ENCODE measurements at regions of chr1 and their contacts with region 1.

Region 1: DNA sequence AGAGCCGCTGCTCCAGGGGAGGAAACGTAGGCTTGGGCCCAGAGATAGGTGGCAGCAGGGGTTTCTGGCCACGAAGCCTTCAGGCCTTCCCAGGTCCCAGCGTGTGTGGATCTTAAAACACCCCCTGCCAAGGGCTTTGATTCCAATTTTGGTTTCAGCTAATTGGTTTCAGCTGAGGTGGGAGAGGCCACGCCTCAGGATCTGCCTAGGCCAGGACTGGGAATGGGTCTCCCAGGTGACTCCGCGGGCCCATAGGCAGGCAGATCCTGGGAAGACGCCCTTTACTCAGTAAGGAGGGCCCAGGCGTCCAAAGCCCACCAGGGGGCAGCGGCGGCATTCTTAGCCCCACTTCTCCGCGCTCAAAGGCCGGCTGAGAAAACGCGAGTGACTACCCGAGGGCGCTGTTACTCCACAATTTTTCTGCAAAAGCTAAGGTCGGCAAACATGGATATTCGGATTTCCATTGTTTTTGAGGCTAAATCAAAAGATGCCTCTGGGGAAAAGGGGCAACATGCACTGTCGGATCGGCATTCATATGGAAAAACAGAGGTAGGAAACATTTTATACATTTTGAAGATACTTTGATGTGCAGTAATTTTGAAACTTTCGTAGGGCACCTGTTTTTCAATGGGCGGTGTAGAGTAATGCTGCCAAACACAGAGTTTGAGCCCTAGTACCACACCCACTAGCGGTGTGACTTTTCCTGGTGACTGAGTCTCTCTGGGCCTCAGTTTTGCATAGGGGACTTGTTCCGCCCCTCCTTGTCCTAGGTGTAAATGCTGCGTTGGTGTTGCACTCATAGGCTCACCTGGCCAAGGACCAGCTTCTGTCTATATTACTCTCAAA is 31.8 kb upstream of the BCL10 start:
- DNase-seq: peak; percentile 95
- H3K4me3 ChIP-seq: no peak overlapping the region
- H3K27ac ChIP-seq: peak overlapping the region; percentile 12; the same call in 1 of the 2 replicates
- H3K4me1 ChIP-seq: peaks cover 39% of the 10 kb centered on the region
- H3K27me3 ChIP-seq: no peaks in the 10 kb centered on the region

Region 2: DNA sequence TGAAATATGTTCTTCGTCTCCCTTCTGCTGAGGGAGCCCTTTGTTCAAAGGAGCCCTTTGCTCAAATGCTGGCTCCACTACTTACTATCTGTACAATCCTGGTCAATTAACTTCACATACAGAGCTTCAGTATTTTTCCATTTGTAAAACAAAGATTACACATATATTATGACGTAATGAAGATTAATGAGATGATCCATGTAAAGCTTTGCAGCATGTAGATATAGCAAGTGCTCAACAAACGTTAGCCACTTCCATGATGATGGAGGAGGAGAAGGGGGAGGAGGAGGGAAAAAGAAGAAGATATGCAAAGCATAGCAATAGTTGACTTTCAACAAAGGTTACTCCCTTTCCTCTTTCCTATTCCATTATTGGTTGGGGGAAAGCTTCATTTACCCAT is 166.8 kb after region 1 on chr1:
- in situ Hi-C with region 1: no loop called
- DNase-seq: no peak
- H3K4me3 ChIP-seq: no peak overlapping the region
- H3K27ac ChIP-seq: no peak overlapping the region
- H3K4me1 ChIP-seq: no peaks in the 10 kb centered on the region
- H3K27me3 ChIP-seq: no peaks in the 10 kb centered on the region

Region 3: GRCh38 chr1:85576642-85577418 is 268.6 kb after region 1 on chr1:
- in situ Hi-C with region 1: loop called (anchors 10 kb)
- DNase-seq: peak; percentile 96
- H3K4me3 ChIP-seq: peak overlapping the region; percentile 98
- H3K27ac ChIP-seq: peak overlapping the region; percentile 96
- H3K4me1 ChIP-seq: peaks cover 45% of the 10 kb centered on the region
- H3K27me3 ChIP-seq: no peaks in the 10 kb centered on the region

Region 4: DNA sequence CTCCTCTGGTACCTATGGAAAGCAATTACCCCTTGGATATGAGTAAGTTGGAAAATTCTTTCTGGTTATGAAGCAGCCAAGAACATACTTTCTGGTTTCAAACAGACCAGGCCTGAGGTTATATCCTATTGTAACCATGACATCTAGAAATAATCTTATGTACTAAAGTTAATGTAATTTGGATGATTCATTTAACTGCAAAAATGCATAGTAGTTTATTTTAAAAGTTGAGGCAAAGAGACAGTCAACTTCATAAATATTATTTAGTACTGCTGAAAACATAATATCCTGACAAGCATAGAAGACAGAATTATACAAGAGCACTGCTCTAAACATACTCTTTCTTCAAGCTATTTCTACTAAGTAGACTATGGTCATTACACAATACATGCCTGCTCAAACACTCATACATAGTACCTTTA is 1062.4 kb after region 1 on chr1:
- in situ Hi-C with region 1: no loop called
- DNase-seq: peak; percentile 66
- H3K4me3 ChIP-seq: no peak overlapping the region
- H3K27ac ChIP-seq: peak overlapping the region; percentile 58
- H3K4me1 ChIP-seq: peaks cover 15% of the 10 kb centered on the region
- H3K27me3 ChIP-seq: no peaks in the 10 kb centered on the region

Measured in GM23248 (cell line).